ENCODE measurements at regions of chr7 and their contacts with region 1.

Region 1: DNA sequence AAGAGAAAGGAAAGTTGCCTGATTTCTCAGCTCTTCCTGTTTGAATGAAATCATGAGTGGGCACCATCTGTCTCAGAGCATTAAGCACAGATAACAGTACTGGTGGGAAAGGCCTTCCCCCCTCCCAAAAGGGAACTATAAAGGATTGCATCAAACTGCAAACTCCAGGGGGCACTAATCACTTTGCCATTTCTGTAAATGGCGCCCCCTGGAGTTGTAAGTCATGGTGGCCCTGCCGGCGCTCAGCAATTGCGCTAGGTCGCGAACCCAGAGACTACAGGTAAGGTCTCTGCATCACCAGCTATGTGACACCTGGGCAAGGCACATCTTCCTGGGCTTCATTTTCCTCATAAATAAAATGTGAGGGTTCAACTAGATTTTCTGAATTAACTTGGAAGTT is 11.1 kb downstream of the LRRC4 start:
- DNase-seq: peak in 1 of 2 experiments; percentile 89
- H3K4me3 ChIP-seq: no peak overlapping the region
- H3K27ac ChIP-seq: no peak overlapping the region
- H3K4me1 ChIP-seq: peaks cover 11 to 27% (median 19%) of the 10 kb centered on the region in 4 experiments
- H3K27me3 ChIP-seq: no peaks in the 10 kb centered on the region
- CTCF ChIP-seq: peak; percentile 78 to 99 (median 84)
- EP300 ChIP-seq: no peak
- POLR2A ChIP-seq: no peak
- RAD21 ChIP-seq: peak; percentile 52 to 72

Region 2: DNA sequence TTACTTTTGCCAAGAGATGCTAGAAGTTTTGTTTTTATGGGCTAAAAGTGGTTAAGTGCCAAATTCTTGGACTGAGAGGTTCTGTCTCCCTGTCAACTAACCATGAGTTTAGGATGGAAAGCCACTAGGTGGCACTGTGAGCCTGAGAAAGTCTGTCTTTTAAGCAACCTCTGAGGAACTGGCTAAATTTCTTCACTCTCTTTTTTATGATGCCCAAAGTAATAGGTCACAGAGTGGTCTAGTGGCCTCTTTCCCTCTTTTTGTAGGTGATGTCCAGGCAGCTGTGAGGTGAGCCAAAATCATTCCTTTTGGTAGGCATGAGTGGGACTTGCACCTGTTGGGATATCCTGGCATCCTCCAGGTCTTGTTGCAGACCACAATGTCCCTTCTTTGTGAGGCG is 311.4 kb before region 1 on chr7:
- CTCF ChIA-PET with region 1: interaction called, 15 read pairs
- POLR2A ChIA-PET with region 1: no interaction called
- DNase-seq: peak in 1 of 2 experiments; percentile 79
- H3K4me3 ChIP-seq: no peak overlapping the region
- H3K27ac ChIP-seq: no peak overlapping the region
- H3K4me1 ChIP-seq: no peaks in the 10 kb centered on the region
- H3K27me3 ChIP-seq: no peaks in the 10 kb centered on the region
- CTCF ChIP-seq: peak in 2 of 3 experiments; percentile 74 to 81; a peak in 3 of 4 replicates
- EP300 ChIP-seq: no peak
- POLR2A ChIP-seq: no peak
- RAD21 ChIP-seq: peak; percentile 91 to 94

Region 3: DNA sequence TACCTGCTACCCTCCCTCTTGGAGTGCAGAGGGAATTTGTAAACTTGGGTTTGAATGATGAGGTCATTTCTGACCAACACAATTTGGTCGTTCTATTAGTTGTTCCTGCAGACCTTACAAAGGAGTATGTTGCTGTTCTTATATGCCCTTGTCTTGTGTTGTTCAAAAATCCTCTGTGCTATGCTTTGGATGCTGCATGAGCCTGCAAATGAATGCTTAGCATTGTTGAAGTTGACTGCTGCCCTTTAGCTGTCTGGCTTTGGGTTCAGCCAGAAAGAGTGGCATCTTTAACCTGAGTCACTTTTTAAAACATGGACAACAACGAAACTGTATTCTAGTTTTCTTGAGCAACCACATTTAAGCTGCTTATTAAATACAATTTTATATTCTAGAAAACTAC is 287.9 kb before region 1 on chr7:
- CTCF ChIA-PET with region 1: no interaction called
- POLR2A ChIA-PET with region 1: no interaction called
- DNase-seq: no peak
- H3K4me3 ChIP-seq: no peak overlapping the region
- H3K27ac ChIP-seq: no peak overlapping the region
- H3K4me1 ChIP-seq: peaks cover 1 to 12% (median 10%) of the 10 kb centered on the region in 4 experiments
- H3K27me3 ChIP-seq: no peaks in the 10 kb centered on the region
- CTCF ChIP-seq: no peak
- EP300 ChIP-seq: no peak
- POLR2A ChIP-seq: no peak
- RAD21 ChIP-seq: no peak

Region 4: GRCh38 chr7:127968547-127968946 is 51.6 kb before region 1 on chr7:
- CTCF ChIA-PET with region 1: interaction called, 21 read pairs
- POLR2A ChIA-PET with region 1: no interaction called
- DNase-seq: no peak
- H3K4me3 ChIP-seq: no peak overlapping the region
- H3K27ac ChIP-seq: no peak overlapping the region
- H3K4me1 ChIP-seq: no peaks in the 10 kb centered on the region
- H3K27me3 ChIP-seq: no peaks in the 10 kb centered on the region
- CTCF ChIP-seq: no peak
- EP300 ChIP-seq: no peak
- POLR2A ChIP-seq: no peak
- RAD21 ChIP-seq: no peak

Region 5: GRCh38 chr7:127995156-127995880 is 24.8 kb before region 1 on chr7:
- CTCF ChIA-PET with region 1: interaction called, 13 read pairs
- POLR2A ChIA-PET with region 1: no interaction called
- DNase-seq: no peak
- H3K4me3 ChIP-seq: no peak overlapping the region
- H3K27ac ChIP-seq: no peak overlapping the region
- H3K4me1 ChIP-seq: peaks cover 2 to 15% (median 9%) of the 10 kb centered on the region in 4 experiments; a peak in 6 of 7 replicates
- H3K27me3 ChIP-seq: no peaks in the 10 kb centered on the region
- CTCF ChIP-seq: no peak
- EP300 ChIP-seq: no peak
- POLR2A ChIP-seq: no peak
- RAD21 ChIP-seq: no peak

Region 6: GRCh38 chr7:128031901-128032604 is 11.9 kb after region 1 on chr7:
- CTCF ChIA-PET with region 1: interaction called, 59 read pairs
- POLR2A ChIA-PET with region 1: interaction called, 5 read pairs
- DNase-seq: peak in 1 of 2 experiments; percentile 67
- H3K4me3 ChIP-seq: peak overlapping the region; percentile 53 to 74 (median 58)
- H3K27ac ChIP-seq: no peak overlapping the region
- H3K4me1 ChIP-seq: peaks cover 0 to 24% (median 14%) of the 10 kb centered on the region in 4 experiments; a peak in 5 of 7 replicates
- H3K27me3 ChIP-seq: peaks cover 0 to 25% (median 10%) of the 10 kb centered on the region in 4 experiments; a peak in 5 of 7 replicates
- CTCF ChIP-seq: peak in 1 of 3 experiments; percentile 9; a peak in 1 of 4 replicates
- EP300 ChIP-seq: no peak
- POLR2A ChIP-seq: no peak; a peak in 1 of 3 replicates
- RAD21 ChIP-seq: peak in 1 of 2 experiments; percentile 16; a peak in 1 of 4 replicates

Region 7: DNA sequence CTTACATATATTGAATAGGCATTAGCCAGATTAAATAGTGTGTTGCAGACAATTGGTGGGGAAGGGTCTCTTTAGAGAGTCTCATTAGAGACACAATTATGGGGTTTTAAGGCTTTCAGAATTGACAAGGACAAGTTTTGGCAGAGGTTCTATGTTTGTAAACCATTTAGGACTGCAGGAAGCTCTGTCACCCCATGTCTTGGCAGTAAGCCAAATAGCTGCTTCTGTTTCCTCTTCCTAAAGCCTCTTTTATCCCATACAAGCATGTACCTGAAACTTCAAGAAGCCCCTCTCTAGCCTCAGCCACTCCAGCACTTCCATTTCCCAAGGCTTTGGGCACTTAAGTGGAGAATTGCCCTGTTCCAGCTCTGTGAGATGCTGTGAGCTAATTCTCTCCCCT is 32.9 kb after region 1 on chr7:
- CTCF ChIA-PET with region 1: interaction called, 22 read pairs
- POLR2A ChIA-PET with region 1: no interaction called
- DNase-seq: no peak
- H3K4me3 ChIP-seq: no peak overlapping the region
- H3K27ac ChIP-seq: no peak overlapping the region
- H3K4me1 ChIP-seq: no peaks in the 10 kb centered on the region
- H3K27me3 ChIP-seq: no peaks in the 10 kb centered on the region
- CTCF ChIP-seq: no peak
- EP300 ChIP-seq: no peak
- POLR2A ChIP-seq: no peak
- RAD21 ChIP-seq: no peak

Region 8: GRCh38 chr7:128341733-128342132 is 321.6 kb after region 1 on chr7:
- CTCF ChIA-PET with region 1: no interaction called
- POLR2A ChIA-PET with region 1: no interaction called
- DNase-seq: no peak
- H3K4me3 ChIP-seq: no peak overlapping the region
- H3K27ac ChIP-seq: no peak overlapping the region
- H3K4me1 ChIP-seq: peaks cover 0 to 5% (median 4%) of the 10 kb centered on the region in 4 experiments; a peak in 3 of 7 replicates
- H3K27me3 ChIP-seq: no peaks in the 10 kb centered on the region
- CTCF ChIP-seq: no peak
- EP300 ChIP-seq: no peak
- POLR2A ChIP-seq: no peak
- RAD21 ChIP-seq: no peak